B cell (primary cell): ENCODE measurements at regions of chr2 and their contacts with region 1.

Region 1: GRCh38 chr2:68282811-68283418 is 30.6 kb upstream of the PPP3R1 start:
- DNase-seq: peak; percentile 57
- ATAC-seq: peak; percentile 53
- H3K4me3 ChIP-seq: no peak overlapping the region
- H3K4me3 Mint-ChIP-seq: no peak overlapping the region
- H3K27ac ChIP-seq: no peak overlapping the region
- H3K27ac Mint-ChIP-seq: no peak overlapping the region
- H3K4me1 ChIP-seq: peaks cover 0 to 3% of the 10 kb centered on the region in 2 donors
- H3K4me1 Mint-ChIP-seq: peaks cover 4% of the 10 kb centered on the region
- H3K27me3 ChIP-seq: no peaks in the 10 kb centered on the region
- H3K27me3 Mint-ChIP-seq: no peaks in the 10 kb centered on the region
- CTCF ChIP-seq: peak; percentile 88

Region 2: DNA sequence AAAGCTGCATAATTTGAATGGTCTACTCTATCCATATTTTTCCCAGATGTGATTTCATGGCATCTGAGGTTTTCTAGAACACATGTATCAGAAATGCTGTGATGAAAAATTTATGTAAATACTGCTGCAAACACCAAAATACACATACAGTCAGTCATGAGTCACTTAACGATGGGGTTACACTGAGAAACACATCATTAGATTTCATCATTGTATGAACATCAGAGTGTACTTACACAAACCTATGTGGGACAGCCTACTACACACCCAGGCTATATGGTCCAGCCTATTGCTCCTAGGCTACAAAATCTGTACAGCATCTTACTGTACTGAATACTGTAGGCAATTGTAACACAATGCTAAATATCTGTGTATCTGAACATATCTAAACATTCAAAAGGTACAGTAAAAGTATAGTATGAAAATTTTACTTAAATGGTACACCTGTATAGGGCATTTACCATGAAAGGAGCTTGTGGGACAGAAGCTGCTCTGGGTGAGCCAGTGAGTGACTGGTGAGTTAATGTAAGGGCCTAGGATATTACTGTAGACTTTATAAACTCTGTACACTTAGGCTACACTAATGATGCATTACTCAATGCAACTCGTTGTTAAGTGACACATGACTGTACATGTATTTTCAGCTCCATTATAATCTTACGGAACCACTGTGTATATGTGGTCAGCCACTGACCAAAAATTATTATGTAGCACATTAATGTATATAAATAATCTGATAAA is 91.8 kb before region 1 on chr2:
- CTCF ChIA-PET with region 1: interaction called, 103 read pairs
- POLR2A ChIA-PET with region 1: no interaction called
- intact Hi-C with region 1: loop called (anchors 1 kb)
- DNase-seq: no peak
- ATAC-seq: no peak
- H3K4me3 ChIP-seq: no peak overlapping the region
- H3K4me3 Mint-ChIP-seq: no peak overlapping the region
- H3K27ac ChIP-seq: peak overlapping the region in 1 of 2 donors; percentile 62
- H3K27ac Mint-ChIP-seq: no peak overlapping the region
- H3K4me1 ChIP-seq: peaks cover 8 to 14% of the 10 kb centered on the region in 2 donors
- H3K4me1 Mint-ChIP-seq: peaks cover 48% of the 10 kb centered on the region
- H3K27me3 ChIP-seq: no peaks in the 10 kb centered on the region
- H3K27me3 Mint-ChIP-seq: no peaks in the 10 kb centered on the region
- CTCF ChIP-seq: no peak

Region 3: GRCh38 chr2:68251187-68251854 is 31.6 kb before region 1 on chr2:
- CTCF ChIA-PET with region 1: interaction called, 12 read pairs
- POLR2A ChIA-PET with region 1: no interaction called
- intact Hi-C with region 1: no loop called
- DNase-seq: peak; percentile 92
- ATAC-seq: peak; percentile 60
- H3K4me3 ChIP-seq: peak overlapping the region; percentile 76 to 97 (median 96)
- H3K4me3 Mint-ChIP-seq: peak overlapping the region; percentile 90
- H3K27ac ChIP-seq: peak overlapping the region; percentile 86 to 92
- H3K27ac Mint-ChIP-seq: peak overlapping the region; percentile 93
- H3K4me1 ChIP-seq: peaks cover 39 to 55% of the 10 kb centered on the region in 2 donors
- H3K4me1 Mint-ChIP-seq: peaks cover 36% of the 10 kb centered on the region
- H3K27me3 ChIP-seq: no peaks in the 10 kb centered on the region
- H3K27me3 Mint-ChIP-seq: no peaks in the 10 kb centered on the region
- CTCF ChIP-seq: peak; percentile 77

Region 4: GRCh38 chr2:68272246-68272994 is 10.5 kb before region 1 on chr2:
- CTCF ChIA-PET with region 1: interaction called, 14 read pairs
- POLR2A ChIA-PET with region 1: no interaction called
- intact Hi-C with region 1: no loop called
- DNase-seq: no peak
- ATAC-seq: no peak
- H3K4me3 ChIP-seq: no peak overlapping the region
- H3K4me3 Mint-ChIP-seq: no peak overlapping the region
- H3K27ac ChIP-seq: no peak overlapping the region
- H3K27ac Mint-ChIP-seq: no peak overlapping the region
- H3K4me1 ChIP-seq: no peaks in the 10 kb centered on the region
- H3K4me1 Mint-ChIP-seq: no peaks in the 10 kb centered on the region
- H3K27me3 ChIP-seq: peaks cover 0 to 3% (median 0%) of the 10 kb centered on the region in 4 experiments
- H3K27me3 Mint-ChIP-seq: peaks cover 6% of the 10 kb centered on the region
- CTCF ChIP-seq: no peak

Region 5: GRCh38 chr2:68295516-68295915 is 12.6 kb after region 1 on chr2:
- CTCF ChIA-PET with region 1: interaction called, 23 read pairs
- POLR2A ChIA-PET with region 1: no interaction called
- intact Hi-C with region 1: no loop called
- DNase-seq: peak; percentile 47
- ATAC-seq: no peak
- H3K4me3 ChIP-seq: no peak overlapping the region
- H3K4me3 Mint-ChIP-seq: no peak overlapping the region
- H3K27ac ChIP-seq: no peak overlapping the region
- H3K27ac Mint-ChIP-seq: no peak overlapping the region
- H3K4me1 ChIP-seq: peaks cover 11 to 12% of the 10 kb centered on the region in 2 donors
- H3K4me1 Mint-ChIP-seq: peaks cover 15% of the 10 kb centered on the region
- H3K27me3 ChIP-seq: no peaks in the 10 kb centered on the region
- H3K27me3 Mint-ChIP-seq: no peaks in the 10 kb centered on the region
- CTCF ChIP-seq: no peak

Region 6: GRCh38 chr2:68423966-68424650 is 141.2 kb after region 1 on chr2:
- CTCF ChIA-PET with region 1: no interaction called
- POLR2A ChIA-PET with region 1: no interaction called
- intact Hi-C with region 1: no loop called
- DNase-seq: peak; percentile 74
- ATAC-seq: peak; percentile 81
- H3K4me3 ChIP-seq: peak overlapping the region in 2 of 5 experiments; percentile 3 to 29
- H3K4me3 Mint-ChIP-seq: no peak overlapping the region
- H3K27ac ChIP-seq: peak overlapping the region; percentile 37 to 54
- H3K27ac Mint-ChIP-seq: no peak overlapping the region
- H3K4me1 ChIP-seq: peaks cover 78 to 82% of the 10 kb centered on the region in 2 donors
- H3K4me1 Mint-ChIP-seq: peaks cover 57% of the 10 kb centered on the region
- H3K27me3 ChIP-seq: no peaks in the 10 kb centered on the region
- H3K27me3 Mint-ChIP-seq: no peaks in the 10 kb centered on the region
- CTCF ChIP-seq: no peak